ENCODE measurements at regions of chr1 and their contacts with region 1.

Region 1: GRCh38 chr1:184982002-184982954 is 8.0 kb upstream of the NIBAN1 start:
- DNase-seq: peak; percentile 59
- ATAC-seq: peak; percentile 97
- H3K4me3 ChIP-seq: no peak overlapping the region
- H3K27ac ChIP-seq: no peak overlapping the region
- H3K4me1 ChIP-seq: no peaks in the 10 kb centered on the region
- H3K27me3 ChIP-seq: peaks cover 13% of the 10 kb centered on the region
- CTCF ChIP-seq: peak; percentile 91

Region 2: DNA sequence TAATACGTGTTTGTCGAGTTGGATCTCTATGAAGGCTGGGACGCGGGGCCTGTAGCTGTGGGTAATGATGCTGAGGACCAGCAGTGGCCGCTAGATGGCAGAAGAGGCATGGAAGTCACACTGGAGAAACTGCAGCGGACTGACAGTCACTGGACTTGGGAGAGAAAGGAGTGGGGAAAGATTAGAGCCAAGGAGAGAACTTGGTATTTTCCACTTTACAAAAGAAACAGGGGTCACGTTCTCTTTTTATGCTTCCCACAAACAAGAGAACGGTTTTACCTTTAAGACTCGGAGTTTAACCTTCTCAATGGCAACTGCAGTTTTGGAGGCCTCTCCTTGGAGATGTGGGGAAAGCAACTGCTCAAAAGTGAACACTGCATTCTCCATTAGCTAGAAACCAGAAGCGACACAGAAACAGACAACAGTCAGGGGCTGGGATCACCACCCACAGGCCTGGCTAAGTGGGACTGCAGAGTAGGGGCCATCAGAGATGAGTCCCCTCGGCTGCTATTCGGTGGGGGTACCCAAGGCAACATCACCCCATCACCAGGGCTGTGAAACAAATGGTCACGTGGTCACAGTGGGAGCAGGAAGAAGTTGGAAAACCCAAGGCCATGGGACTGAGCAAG is 176.5 kb before region 1 on chr1:
- CTCF ChIA-PET with region 1: interaction called, 7 read pairs
- POLR2A ChIA-PET with region 1: no interaction called
- in situ Hi-C with region 1: no loop called
- intact Hi-C with region 1: loop called (anchors 1 kb)
- DNase-seq: peak; percentile 82
- ATAC-seq: peak; percentile 100
- H3K4me3 ChIP-seq: 0 out of 4 replicates have a peak overlapping the region, but pooled peaks of 1 of the 2 experiments have one; percentile 14
- H3K27ac ChIP-seq: no peak overlapping the region
- H3K4me1 ChIP-seq: no peaks in the 10 kb centered on the region
- H3K27me3 ChIP-seq: no peaks in the 10 kb centered on the region
- CTCF ChIP-seq: peak; percentile 91

Region 3: DNA sequence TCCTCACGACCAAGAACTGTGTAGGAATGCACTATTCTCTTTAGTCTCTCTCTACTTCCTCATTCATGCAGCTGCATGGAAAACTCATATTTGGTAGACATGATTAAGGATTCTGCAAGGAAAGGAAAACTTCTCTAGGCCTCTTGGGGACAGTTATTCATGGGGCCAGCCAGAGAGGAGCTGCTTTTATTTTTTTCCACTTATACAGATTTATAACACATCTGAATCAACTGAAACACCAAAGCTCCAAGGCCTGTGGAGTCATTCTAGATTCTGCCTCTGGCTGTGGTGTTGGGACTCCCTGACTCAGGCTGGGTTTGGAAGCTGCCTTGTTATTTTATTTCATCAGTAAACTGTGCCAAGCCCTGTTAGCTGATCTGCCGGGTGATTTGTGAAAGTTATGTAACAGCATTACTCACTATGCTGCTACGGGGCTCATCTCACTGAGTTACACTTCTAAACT is 143.8 kb before region 1 on chr1:
- CTCF ChIA-PET with region 1: no interaction called
- POLR2A ChIA-PET with region 1: no interaction called
- in situ Hi-C with region 1: no loop called
- intact Hi-C with region 1: no loop called
- DNase-seq: no peak
- ATAC-seq: no peak
- H3K4me3 ChIP-seq: no peak overlapping the region
- H3K27ac ChIP-seq: no peak overlapping the region
- H3K4me1 ChIP-seq: no peaks in the 10 kb centered on the region
- H3K27me3 ChIP-seq: no peaks in the 10 kb centered on the region
- CTCF ChIP-seq: no peak

Region 4: DNA sequence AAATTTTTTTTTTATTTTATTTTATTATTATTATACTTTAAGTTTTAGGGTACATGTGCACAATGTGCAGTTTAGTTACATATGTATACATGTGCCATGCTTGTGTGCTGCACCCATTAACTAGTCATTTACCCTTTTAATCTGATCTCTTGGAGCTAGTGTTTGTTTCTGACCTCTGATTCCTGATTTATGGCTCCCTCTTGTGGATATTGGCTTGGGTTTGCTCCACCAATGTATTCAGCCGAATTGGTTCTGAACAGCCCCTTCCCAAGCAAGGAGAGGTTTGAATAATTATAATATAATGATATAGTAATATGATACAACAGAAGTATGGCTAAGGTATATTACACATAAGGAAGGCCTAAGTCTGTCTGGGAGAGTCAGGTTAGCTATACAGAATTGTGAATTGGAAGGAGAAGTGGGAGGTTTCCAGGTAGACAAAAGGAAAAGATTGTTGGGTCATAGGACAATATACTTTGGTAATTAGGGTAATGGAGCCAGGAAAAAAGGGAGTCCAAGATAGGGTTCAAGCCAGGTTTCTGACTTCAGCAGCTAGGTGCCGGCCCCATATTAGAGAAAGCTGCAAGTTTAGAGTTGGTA is 698.9 kb after region 1 on chr1:
- CTCF ChIA-PET with region 1: no interaction called
- POLR2A ChIA-PET with region 1: no interaction called
- in situ Hi-C with region 1: no loop called
- intact Hi-C with region 1: loop called (anchors 10 kb)
- DNase-seq: no peak
- ATAC-seq: peak; percentile 89
- H3K4me3 ChIP-seq: no peak overlapping the region
- H3K27ac ChIP-seq: no peak overlapping the region
- H3K4me1 ChIP-seq: no peaks in the 10 kb centered on the region
- H3K27me3 ChIP-seq: no peaks in the 10 kb centered on the region
- CTCF ChIP-seq: peak; percentile 72

Measured in Panc1 (cell line).